ENCODE measurements at regions of chr19 and their contacts with region 1.

Region 1: DNA sequence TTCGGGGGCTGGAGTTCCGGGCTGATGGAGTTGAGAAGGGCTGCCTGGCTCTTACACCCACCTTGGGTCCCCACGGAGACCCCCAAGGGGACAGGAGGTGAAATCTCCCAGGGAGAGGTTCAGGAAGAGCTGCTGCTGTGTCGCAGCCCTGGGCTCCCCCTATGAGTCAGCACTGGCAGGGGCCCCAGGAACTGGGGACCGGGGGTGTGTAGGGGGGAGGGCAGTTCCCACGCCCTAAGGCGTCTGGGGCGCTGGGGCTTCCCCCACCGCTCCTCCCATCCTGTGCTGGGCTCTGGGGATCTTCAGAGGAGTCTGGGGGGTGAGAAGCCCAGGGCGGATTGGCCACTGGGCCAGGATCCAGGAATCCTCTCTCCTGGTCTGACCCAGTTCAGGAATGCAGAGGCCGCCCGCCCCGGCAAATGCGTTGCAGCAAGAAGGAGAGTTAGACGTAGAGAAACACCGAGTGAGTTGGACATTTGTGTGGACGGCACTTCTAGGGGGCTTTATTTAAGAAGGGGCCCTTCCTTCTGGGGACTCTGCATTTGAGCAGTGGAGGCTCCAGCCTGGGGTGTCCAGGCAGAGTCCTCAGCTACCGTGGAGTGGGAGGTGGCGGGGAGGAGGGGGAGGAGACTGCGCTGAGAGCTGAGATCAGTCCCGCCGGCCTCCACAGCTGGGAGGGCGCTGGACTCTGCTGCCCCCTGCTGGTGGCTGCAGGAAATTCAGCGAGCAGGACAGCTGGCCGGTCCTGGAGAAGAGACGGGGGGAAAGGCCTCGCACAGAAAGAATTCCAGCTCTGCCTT is 15.0 kb upstream of the NANOS3 start:
- DNase-seq: peak; percentile 94
- ATAC-seq: peak; percentile 92
- H3K4me3 Mint-ChIP-seq: peak overlapping the region; percentile 85
- H3K27ac Mint-ChIP-seq: peak overlapping the region; percentile 96
- H3K4me1 Mint-ChIP-seq: peaks cover 37% of the 10 kb centered on the region
- H3K27me3 Mint-ChIP-seq: peaks cover 25% of the 10 kb centered on the region

Region 2: GRCh38 chr19:13277104-13277809 is 584.7 kb before region 1 on chr19:
- CTCF ChIA-PET with region 1: no interaction called
- POLR2A ChIA-PET with region 1: no interaction called
- intact Hi-C with region 1: loop called (anchors 1 to 5 kb)
- DNase-seq: peak; percentile 76
- ATAC-seq: peak; percentile 96
- H3K4me3 Mint-ChIP-seq: no peak overlapping the region
- H3K27ac Mint-ChIP-seq: peak overlapping the region; percentile 86
- H3K4me1 Mint-ChIP-seq: peaks cover 13% of the 10 kb centered on the region
- H3K27me3 Mint-ChIP-seq: no peaks in the 10 kb centered on the region

Region 3: DNA sequence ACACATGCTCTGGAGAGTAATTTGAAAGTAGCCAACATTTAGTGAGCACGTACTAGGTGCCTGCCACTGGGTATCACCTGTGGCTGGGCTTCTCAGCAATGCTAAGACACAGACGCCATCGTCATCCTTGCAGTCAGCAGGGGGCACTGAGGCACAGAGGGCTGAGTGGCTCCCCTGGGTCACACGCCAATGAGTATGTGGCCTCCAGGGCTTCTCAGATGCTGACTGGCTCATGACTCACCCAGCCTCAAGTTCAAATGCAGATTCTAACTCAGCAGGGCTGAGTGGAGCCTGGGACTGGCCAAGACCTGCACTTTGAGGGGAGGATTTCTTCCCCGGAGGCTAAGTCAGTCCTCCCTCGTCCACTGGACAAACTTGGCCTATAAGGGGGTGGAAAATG is 240.5 kb before region 1 on chr19:
- CTCF ChIA-PET with region 1: no interaction called
- POLR2A ChIA-PET with region 1: no interaction called
- intact Hi-C with region 1: loop called in 1 of 2 experiments (anchors 1 kb)
- DNase-seq: peak; percentile 76
- ATAC-seq: peak; percentile 99
- H3K4me3 Mint-ChIP-seq: no peak overlapping the region
- H3K27ac Mint-ChIP-seq: no peak overlapping the region
- H3K4me1 Mint-ChIP-seq: peaks cover 2% of the 10 kb centered on the region
- H3K27me3 Mint-ChIP-seq: peaks cover 39% of the 10 kb centered on the region

Region 4: DNA sequence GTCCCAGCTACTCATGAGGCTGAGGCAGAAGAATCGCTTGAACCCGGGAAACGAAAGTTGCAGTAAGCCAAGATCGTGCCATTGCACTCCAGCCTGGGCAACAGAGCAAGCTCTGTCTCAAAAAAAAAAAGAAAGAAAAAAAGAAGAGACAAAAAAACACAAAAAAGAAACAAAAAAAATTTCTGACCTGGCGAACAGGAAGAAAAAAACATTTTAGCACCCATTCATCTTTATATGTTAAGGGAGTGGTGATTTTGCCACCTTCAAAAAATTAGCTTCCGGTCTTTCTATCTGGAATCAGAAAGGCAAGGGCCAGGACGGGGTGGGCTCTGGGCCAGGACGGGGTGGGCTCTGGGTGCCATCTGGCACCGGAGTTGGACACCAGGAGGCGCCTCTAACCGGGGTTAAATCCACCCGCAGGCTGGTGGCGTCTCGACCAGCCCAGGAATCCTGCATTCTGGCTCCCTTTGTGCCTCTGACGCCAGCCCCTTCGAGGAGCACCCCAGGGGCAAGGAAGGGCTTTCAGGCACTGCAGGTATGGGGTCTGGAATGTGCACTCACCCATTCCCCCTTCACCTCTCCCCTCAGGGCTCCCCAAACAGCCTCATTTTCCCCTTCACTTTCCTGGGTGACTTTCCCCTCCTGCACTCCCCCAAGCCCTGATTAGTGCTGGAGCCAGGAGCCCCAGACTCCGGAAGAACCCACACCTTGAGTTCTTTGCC is 77.0 kb before region 1 on chr19:
- CTCF ChIA-PET with region 1: interaction called, 105 read pairs
- POLR2A ChIA-PET with region 1: interaction called, 9 read pairs
- intact Hi-C with region 1: loop called (anchors 1 kb)
- DNase-seq: peak; percentile 88
- ATAC-seq: peak; percentile 84
- H3K4me3 Mint-ChIP-seq: peak overlapping the region; percentile 31
- H3K27ac Mint-ChIP-seq: peak overlapping the region; percentile 66
- H3K4me1 Mint-ChIP-seq: peaks cover 45% of the 10 kb centered on the region
- H3K27me3 Mint-ChIP-seq: no peaks in the 10 kb centered on the region

Region 5: DNA sequence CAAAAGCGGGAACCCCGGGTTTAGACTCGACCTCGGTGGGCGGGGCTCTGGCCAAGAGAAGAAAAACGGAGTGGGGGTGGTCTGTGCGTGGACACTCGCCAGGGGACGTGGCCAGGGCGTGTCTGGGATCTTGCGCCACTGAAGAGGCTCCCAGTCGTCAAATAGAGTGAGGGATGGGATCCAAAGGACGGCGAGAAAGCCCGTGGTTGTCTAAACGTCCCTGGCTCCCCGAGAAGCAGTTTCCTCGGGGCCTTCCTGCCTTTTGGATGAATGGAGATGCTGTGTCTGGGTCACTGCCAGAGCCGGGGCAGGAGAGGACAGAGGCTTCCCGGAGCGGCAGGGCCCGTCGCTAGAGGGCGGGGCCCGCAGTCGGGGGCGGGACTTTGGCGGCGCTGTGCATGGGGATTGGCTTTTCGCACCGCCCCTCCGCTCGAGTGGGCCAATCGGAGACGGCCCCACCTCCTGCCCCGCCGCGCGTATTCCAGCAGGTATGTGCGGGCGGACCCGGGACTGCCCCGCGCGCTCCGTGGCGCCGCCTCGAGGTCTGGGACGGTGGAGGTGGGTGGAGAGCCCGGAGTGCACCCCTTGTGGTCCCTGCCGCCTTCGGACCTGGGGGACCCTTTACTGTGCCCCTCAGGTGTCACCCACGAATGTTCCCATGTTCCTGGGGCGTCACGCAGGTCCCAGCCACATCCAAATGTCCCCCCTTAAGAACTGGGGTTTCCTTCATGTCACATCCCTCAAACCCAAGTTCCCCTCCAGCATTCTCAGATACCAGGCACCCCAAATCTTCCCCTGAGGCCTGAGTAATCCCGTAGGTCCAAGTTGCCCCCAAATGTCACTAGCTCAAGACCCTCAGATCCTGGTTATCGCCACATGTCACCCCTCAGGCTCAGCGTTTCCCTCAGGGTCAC is 28.3 kb before region 1 on chr19:
- CTCF ChIA-PET with region 1: interaction called, 19 read pairs
- POLR2A ChIA-PET with region 1: interaction called, 15 read pairs
- intact Hi-C with region 1: no loop called
- DNase-seq: peak; percentile 97
- ATAC-seq: peak; percentile 90
- H3K4me3 Mint-ChIP-seq: peak overlapping the region; percentile 65
- H3K27ac Mint-ChIP-seq: peak overlapping the region; percentile 91
- H3K4me1 Mint-ChIP-seq: peaks cover 37% of the 10 kb centered on the region
- H3K27me3 Mint-ChIP-seq: no peaks in the 10 kb centered on the region

Region 6: DNA sequence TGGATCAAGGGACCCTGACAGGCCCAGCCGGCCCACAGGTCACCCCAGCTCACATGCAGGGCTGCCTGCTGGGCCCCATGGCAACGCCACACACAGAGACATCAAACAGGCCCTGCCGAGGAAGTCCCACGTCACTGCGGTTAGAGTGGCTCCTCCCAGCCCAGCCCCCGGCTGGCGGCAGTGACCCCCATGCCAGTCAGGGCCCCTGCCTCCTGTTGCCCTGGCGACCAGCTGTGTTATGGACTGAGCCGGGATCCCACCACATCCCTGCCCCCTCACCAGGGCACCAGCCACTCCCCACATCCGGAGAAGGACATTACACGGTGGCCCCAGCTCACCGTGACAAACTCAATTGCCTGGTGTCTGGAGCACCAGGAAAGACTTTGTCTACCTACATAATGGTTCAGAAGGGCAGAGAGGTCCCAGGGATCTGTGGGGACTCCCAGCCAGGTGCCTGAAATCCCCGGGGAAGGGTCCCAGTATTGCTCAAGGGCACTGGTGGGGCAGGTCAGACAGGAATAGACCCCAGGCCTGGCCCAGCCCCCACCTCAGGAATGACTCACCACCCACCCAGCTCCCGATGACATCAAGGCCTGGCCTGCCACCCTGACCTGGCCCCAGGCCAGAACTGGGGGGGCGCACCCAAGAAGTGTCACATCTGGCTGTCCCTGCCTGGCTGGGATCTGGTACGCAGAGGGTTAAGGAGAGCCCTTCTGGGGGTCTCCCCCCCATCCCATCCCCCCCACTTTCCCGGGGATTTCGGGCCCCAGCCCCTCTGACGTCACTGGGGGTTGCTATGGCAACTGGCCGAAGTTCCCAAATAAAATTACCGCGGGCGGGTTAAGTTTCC is 15.2 kb before region 1 on chr19:
- CTCF ChIA-PET with region 1: interaction called, 27 read pairs
- POLR2A ChIA-PET with region 1: interaction called, 21 read pairs
- intact Hi-C with region 1: loop called (anchors 1 kb)
- DNase-seq: peak; percentile 97
- ATAC-seq: peak; percentile 69
- H3K4me3 Mint-ChIP-seq: peak overlapping the region; percentile 71
- H3K27ac Mint-ChIP-seq: peak overlapping the region; percentile 97
- H3K4me1 Mint-ChIP-seq: peaks cover 56% of the 10 kb centered on the region
- H3K27me3 Mint-ChIP-seq: no peaks in the 10 kb centered on the region